Caco-2 (cell line): ENCODE measurements at regions of chr11 and their contacts with region 1.

Region 1: GRCh38 chr11:12802418-12803085 is 128.3 kb downstream of the TEAD1 start:
- DNase-seq: peak; percentile 98 to 99
- H3K4me3 ChIP-seq: peak overlapping the region; percentile 13
- H3K4me3 Mint-ChIP-seq: peak overlapping the region; percentile 71
- H3K27ac Mint-ChIP-seq: peak overlapping the region; percentile 98
- H3K4me1 ChIP-seq: peaks cover 86% of the 10 kb centered on the region
- H3K4me1 Mint-ChIP-seq: peaks cover 89% of the 10 kb centered on the region
- H3K27me3 ChIP-seq: no peaks in the 10 kb centered on the region
- H3K27me3 Mint-ChIP-seq: no peaks in the 10 kb centered on the region
- CTCF ChIP-seq: no peak

Region 2: GRCh38 chr11:12680246-12680939 is 122.2 kb before region 1 on chr11:
- CTCF ChIA-PET with region 1: no interaction called
- POLR2A ChIA-PET with region 1: interaction called, 7 read pairs
- intact Hi-C with region 1: loop called (anchors 2 kb)
- DNase-seq: no peak
- H3K4me3 ChIP-seq: no peak overlapping the region
- H3K4me3 Mint-ChIP-seq: no peak overlapping the region
- H3K27ac Mint-ChIP-seq: no peak overlapping the region
- H3K4me1 ChIP-seq: peaks cover 65% of the 10 kb centered on the region
- H3K4me1 Mint-ChIP-seq: peaks cover 73% of the 10 kb centered on the region
- H3K27me3 ChIP-seq: no peaks in the 10 kb centered on the region
- H3K27me3 Mint-ChIP-seq: no peaks in the 10 kb centered on the region
- CTCF ChIP-seq: no peak

Region 3: DNA sequence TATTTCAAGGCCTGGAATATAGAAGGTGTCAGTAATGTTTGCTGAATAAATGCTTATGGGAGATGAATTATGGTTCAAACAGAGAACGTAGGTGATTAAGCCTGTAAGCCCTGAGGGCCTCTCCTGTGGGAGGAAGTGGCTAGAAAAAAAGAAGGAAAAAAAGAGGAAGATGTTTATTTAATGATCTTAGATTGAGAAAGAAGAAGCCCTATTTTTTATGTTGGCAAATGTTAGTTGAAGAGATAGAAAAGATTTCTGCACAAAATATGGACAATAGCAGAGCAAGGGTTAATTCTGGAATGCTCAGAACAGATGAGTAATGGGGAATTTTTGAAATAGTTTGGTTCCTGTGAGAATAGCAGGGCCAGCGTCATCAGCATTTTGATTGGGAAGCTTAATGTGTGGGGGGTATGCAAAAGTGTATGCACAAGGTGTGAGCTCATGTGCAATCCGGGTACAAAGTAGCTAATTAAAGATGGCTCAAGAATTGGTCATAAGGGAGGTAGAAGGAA is 32.7 kb before region 1 on chr11:
- CTCF ChIA-PET with region 1: no interaction called
- POLR2A ChIA-PET with region 1: interaction called, 3 read pairs
- intact Hi-C with region 1: loop called (anchors 2 kb)
- DNase-seq: peak in 1 of 2 experiments; percentile 22
- H3K4me3 ChIP-seq: no peak overlapping the region
- H3K4me3 Mint-ChIP-seq: no peak overlapping the region
- H3K27ac Mint-ChIP-seq: no peak overlapping the region
- H3K4me1 ChIP-seq: peaks cover 39% of the 10 kb centered on the region
- H3K4me1 Mint-ChIP-seq: peaks cover 27% of the 10 kb centered on the region
- H3K27me3 ChIP-seq: no peaks in the 10 kb centered on the region
- H3K27me3 Mint-ChIP-seq: no peaks in the 10 kb centered on the region
- CTCF ChIP-seq: no peak

Region 4: GRCh38 chr11:12827929-12828812 is 25.6 kb after region 1 on chr11:
- CTCF ChIA-PET with region 1: interaction called, 4 read pairs
- POLR2A ChIA-PET with region 1: interaction called, 15 read pairs
- intact Hi-C with region 1: loop called (anchors 1 kb)
- DNase-seq: peak; percentile 53 to 66
- H3K4me3 ChIP-seq: peak overlapping the region; percentile 39
- H3K4me3 Mint-ChIP-seq: peak overlapping the region; percentile 90
- H3K27ac Mint-ChIP-seq: peak overlapping the region; percentile 93
- H3K4me1 ChIP-seq: peaks cover 40% of the 10 kb centered on the region
- H3K4me1 Mint-ChIP-seq: peaks cover 53% of the 10 kb centered on the region
- H3K27me3 ChIP-seq: no peaks in the 10 kb centered on the region
- H3K27me3 Mint-ChIP-seq: no peaks in the 10 kb centered on the region
- CTCF ChIP-seq: peak in 1 of 2 experiments; percentile 3

Region 5: DNA sequence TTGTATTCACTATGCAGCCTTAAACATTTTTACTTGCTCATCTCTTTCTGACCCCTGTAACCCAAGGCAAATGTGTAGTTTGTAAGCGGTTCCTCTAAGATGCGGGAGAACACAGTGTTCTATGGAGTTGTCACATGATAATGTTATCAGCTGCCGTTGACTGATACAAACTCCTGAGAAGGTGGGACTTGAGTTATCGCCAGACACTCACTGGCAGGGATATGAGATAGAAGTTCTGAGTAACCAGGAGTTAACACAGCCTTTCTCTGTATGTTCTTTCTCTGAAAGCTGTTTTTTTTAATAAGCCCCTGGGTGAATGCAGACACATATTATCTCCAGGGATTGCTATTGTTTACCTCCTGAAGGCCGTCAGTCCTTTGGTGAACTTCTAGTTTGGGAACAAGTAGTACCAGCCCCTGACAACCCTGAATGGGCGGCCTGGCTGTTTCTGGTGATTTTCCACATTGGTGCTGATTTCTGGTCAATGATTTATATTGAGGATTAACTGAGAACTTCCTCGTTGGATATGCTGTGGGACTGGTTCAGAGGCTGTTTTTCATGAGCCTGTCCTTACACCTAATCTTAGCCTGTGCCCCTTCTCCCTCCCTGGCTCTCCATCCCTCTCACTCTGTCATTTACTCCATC is 51.2 kb after region 1 on chr11:
- CTCF ChIA-PET with region 1: interaction called, 4 read pairs
- POLR2A ChIA-PET with region 1: no interaction called
- intact Hi-C with region 1: loop called (anchors 1 kb)
- DNase-seq: peak; percentile 57 to 61
- H3K4me3 ChIP-seq: no peak overlapping the region
- H3K4me3 Mint-ChIP-seq: peak overlapping the region; percentile 35
- H3K27ac Mint-ChIP-seq: peak overlapping the region; percentile 91
- H3K4me1 ChIP-seq: peaks cover 42% of the 10 kb centered on the region
- H3K4me1 Mint-ChIP-seq: peaks cover 35% of the 10 kb centered on the region
- H3K27me3 ChIP-seq: no peaks in the 10 kb centered on the region
- H3K27me3 Mint-ChIP-seq: no peaks in the 10 kb centered on the region
- CTCF ChIP-seq: no peak

Region 6: GRCh38 chr11:12989428-12990161 is 187.0 kb after region 1 on chr11:
- CTCF ChIA-PET with region 1: no interaction called
- POLR2A ChIA-PET with region 1: no interaction called
- intact Hi-C with region 1: no loop called
- DNase-seq: no peak
- H3K4me3 ChIP-seq: no peak overlapping the region
- H3K4me3 Mint-ChIP-seq: no peak overlapping the region
- H3K27ac Mint-ChIP-seq: no peak overlapping the region
- H3K4me1 ChIP-seq: no peaks in the 10 kb centered on the region
- H3K4me1 Mint-ChIP-seq: no peaks in the 10 kb centered on the region
- H3K27me3 ChIP-seq: no peaks in the 10 kb centered on the region
- H3K27me3 Mint-ChIP-seq: peaks cover 7% of the 10 kb centered on the region
- CTCF ChIP-seq: no peak